Activated CD8-positive, alpha-beta T cell treated with anti-CD3 and anti-CD28 coated beads, Interleukin-2, amount 10 ng/mL, durations not matched to agents 7 days and 5 days (primary cell): ENCODE measurements at regions of chr6 and their contacts with region 1.

Region 1: GRCh38 chr6:137589067-137589848 is 95.1 kb upstream of the OLIG3 start:
- DNase-seq: peak; percentile 77
- ATAC-seq: peak; percentile 100
- H3K4me3 Mint-ChIP-seq: no peak overlapping the region
- H3K27ac Mint-ChIP-seq: no peak overlapping the region
- H3K4me1 Mint-ChIP-seq: peaks cover 12% of the 10 kb centered on the region
- H3K27me3 Mint-ChIP-seq: peaks cover 12% of the 10 kb centered on the region

Region 2: DNA sequence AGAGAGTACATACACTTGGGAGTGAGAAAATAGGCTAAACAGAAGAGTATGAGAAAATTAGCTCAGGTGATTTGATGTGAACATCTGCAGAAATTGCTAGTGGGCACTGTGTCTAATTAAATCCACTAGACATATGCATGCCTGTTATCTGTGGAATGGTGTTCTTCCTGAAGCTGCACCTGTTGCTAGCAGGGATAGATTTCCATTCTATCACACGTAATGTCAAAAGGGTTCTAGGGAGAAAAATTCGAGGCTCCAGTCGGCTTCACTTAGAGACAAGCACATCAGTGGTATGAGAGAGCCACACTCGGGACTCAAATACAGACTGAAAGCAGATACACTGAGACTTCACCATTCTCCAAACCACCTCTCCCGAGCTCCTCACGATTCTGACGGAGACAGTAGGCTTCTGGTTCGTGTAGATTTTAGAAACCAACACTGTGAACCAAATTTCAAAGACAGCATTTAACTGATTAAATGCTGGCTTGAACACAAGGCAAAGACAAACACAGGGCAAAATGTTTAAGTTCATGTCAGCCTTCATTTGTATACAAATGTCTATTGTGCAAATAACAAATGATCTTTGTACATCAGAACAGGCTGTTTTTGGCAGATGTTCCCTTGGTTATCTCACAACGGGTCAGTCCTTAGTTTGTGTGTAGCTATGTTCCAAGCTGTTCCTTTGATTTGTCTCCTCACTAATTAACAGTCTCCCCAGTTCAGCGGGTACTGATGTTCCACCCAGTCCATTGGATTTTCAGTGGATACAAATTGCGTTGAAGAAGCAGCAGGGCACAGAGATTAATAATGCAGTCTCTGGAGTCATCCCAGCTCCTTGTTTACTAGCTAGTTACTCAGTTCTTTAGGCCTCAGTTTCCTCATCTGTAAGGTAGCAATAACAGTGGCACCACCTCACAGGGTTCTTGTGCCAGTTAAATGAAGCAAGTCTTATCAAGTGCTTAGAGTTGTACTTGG is 239.1 kb before region 1 on chr6:
- CTCF ChIA-PET with region 1: interaction called, 11 read pairs
- POLR2A ChIA-PET with region 1: no interaction called
- DNase-seq: no peak
- ATAC-seq: no peak
- H3K4me3 Mint-ChIP-seq: no peak overlapping the region
- H3K27ac Mint-ChIP-seq: no peak overlapping the region
- H3K4me1 Mint-ChIP-seq: peaks cover 11% of the 10 kb centered on the region
- H3K27me3 Mint-ChIP-seq: peaks cover 5% of the 10 kb centered on the region

Region 3: DNA sequence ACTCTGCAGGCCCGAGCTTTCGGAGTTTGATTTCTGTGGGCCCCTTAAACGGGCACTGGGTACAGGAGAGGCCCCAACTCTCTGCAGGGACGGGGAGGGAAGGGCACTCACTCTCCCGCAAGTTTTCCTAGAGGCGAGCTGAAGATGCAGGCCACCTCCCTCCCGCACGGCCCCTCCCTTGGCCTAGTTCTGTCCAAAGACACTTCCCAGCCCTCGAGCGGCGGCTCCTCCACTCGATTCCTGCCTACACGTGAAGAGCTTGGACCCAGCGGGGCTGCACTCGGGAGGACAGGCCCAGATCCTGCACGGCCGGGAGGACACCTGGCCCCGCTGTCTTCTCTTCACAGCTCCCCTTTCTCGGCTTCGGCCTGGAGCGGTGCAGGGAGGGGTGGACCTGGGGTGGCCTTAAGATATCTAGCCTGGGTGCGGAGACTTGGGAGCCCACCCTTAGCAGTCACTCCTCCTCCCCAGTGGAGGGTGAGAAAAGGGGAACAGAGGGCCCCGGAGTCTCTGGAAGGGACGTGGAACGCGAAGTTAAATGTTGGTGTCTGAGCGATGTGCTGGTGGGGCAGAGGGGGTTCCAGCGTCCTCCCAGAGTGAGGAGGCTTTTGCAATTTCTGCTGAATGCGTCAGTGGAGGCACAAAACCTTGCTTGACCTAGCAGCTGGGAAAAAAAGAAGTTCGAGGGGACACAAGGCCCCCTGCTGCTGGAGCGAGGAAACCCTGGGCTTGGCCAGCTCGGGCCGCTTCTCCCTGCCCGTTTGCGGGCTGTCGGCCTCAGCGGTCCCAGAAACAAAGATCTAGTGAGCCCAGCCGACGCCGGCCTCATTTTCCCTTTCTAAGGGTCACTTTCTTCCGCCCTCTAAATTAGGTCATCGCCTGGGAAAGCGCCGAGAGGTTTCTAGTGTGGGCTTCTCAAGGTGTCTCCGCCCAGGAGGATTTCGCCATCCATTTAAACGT is 99.9 kb before region 1 on chr6:
- CTCF ChIA-PET with region 1: interaction called, 20 read pairs
- POLR2A ChIA-PET with region 1: no interaction called
- DNase-seq: no peak
- ATAC-seq: no peak
- H3K4me3 Mint-ChIP-seq: peak overlapping the region; percentile 34
- H3K27ac Mint-ChIP-seq: no peak overlapping the region
- H3K4me1 Mint-ChIP-seq: peaks cover 38% of the 10 kb centered on the region
- H3K27me3 Mint-ChIP-seq: peaks cover 90% of the 10 kb centered on the region

Region 4: GRCh38 chr6:137560184-137560563 is 29.1 kb before region 1 on chr6:
- CTCF ChIA-PET with region 1: interaction called, 21 read pairs
- POLR2A ChIA-PET with region 1: no interaction called
- DNase-seq: no peak
- ATAC-seq: no peak
- H3K4me3 Mint-ChIP-seq: no peak overlapping the region
- H3K27ac Mint-ChIP-seq: peak overlapping the region; percentile 58
- H3K4me1 Mint-ChIP-seq: peaks cover 35% of the 10 kb centered on the region
- H3K27me3 Mint-ChIP-seq: no peaks in the 10 kb centered on the region

Region 5: DNA sequence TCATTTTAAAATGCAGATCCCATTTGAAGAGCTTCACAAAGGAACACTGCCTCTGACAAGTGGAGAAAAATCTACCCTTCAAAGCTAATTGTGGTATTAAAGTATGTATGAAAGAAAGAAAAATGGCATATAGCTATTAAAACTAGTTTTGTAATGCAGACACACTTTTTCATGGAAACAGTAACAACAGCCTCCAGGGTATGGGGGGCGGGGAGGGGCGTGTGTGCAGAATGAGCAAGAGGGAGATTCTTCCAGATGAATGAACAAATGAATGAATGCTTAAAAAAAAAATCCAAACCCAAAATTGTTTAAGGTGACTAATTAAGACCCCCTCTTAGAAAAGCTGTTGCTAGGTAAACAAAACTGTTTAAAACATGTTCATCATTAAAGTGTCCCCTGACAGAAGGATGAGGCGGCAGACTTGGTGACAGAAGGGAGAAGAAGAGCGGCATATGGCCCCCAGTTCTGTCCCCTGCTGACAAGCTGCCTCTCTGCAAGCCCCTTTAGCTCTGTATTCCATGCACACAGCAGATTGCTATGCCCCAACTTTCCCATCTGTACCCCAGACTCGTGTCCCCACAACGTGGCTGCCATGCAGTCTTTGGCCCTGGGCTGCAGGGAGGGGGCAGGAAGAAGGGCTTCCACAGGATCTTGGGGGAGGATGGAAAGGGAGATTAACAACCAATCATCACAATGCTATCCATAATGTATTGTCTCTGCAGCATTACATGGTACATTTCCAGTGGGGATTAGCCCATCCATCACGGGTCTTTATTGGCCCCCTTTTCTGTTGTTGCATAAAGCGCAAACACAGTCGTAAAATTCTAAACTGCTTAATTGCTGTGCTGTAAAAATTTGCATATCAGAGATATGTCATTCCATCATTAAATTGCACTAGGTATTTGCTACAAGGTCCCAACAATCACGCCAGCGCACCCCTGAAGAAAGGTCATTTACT is 13.3 kb after region 1 on chr6:
- CTCF ChIA-PET with region 1: interaction called, 21 read pairs
- POLR2A ChIA-PET with region 1: no interaction called
- DNase-seq: no peak
- ATAC-seq: no peak
- H3K4me3 Mint-ChIP-seq: no peak overlapping the region
- H3K27ac Mint-ChIP-seq: no peak overlapping the region
- H3K4me1 Mint-ChIP-seq: no peaks in the 10 kb centered on the region
- H3K27me3 Mint-ChIP-seq: peaks cover 34% of the 10 kb centered on the region